PC-9 (cell line): ENCODE measurements at regions of chr7 and their contacts with region 1.

Region 1: GRCh38 chr7:95871078-95871782 is 98.9 kb downstream of the DYNC1I1 start:
- DNase-seq: peak in 1 of 2 experiments; percentile 9
- H3K4me3 ChIP-seq: no peak overlapping the region
- H3K27ac ChIP-seq: no peak overlapping the region
- H3K4me1 ChIP-seq: no peaks in the 10 kb centered on the region
- H3K27me3 ChIP-seq: no peaks in the 10 kb centered on the region
- CTCF ChIP-seq: peak; percentile 74

Region 2: GRCh38 chr7:95527033-95527775 is 344.0 kb before region 1 on chr7:
- CTCF ChIA-PET with region 1: no interaction called
- POLR2A ChIA-PET with region 1: no interaction called
- intact Hi-C with region 1: loop called (anchors 2 kb)
- DNase-seq: peak; percentile 42 to 47
- H3K4me3 ChIP-seq: no peak overlapping the region
- H3K27ac ChIP-seq: no peak overlapping the region
- H3K4me1 ChIP-seq: peaks cover 10% of the 10 kb centered on the region; the same call in 1 of the 2 replicates
- H3K27me3 ChIP-seq: no peaks in the 10 kb centered on the region
- CTCF ChIP-seq: peak; percentile 95

Region 3: DNA sequence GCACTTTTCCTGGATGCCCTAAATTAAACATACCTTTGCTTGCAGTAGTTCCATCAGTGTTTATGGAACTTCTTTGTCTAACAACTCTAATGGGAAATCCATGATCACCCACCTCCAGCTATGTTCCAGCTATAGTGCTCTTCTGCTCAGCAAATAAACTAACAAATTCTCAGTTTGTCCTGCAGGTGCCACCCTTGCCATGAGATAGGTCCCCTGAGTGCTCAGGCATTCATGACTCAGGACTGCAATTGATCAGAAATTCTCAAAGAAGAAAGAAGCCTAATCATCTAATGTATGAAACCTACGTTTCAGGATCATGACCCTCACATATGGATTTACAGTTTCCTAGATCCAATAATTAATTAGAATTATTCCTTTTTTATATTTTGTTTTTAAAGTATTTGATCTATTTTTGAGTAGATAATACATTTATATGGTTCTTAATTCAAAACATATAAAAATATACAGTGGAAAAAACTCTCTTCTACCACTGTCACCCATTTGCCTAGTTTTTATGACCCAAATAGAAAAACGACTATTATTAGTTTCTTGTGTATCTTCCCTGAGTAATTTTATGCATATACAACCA is 147.5 kb before region 1 on chr7:
- CTCF ChIA-PET with region 1: no interaction called
- POLR2A ChIA-PET with region 1: no interaction called
- intact Hi-C with region 1: loop called (anchors 1 kb)
- DNase-seq: peak in 1 of 2 experiments; percentile 39
- H3K4me3 ChIP-seq: no peak overlapping the region
- H3K27ac ChIP-seq: no peak overlapping the region
- H3K4me1 ChIP-seq: no peaks in the 10 kb centered on the region
- H3K27me3 ChIP-seq: no peaks in the 10 kb centered on the region; the same call in 1 of the 2 replicates
- CTCF ChIP-seq: peak; percentile 74

Region 4: GRCh38 chr7:95772298-95772770 is 98.9 kb before region 1 on chr7 and contains the start of gene DYNC1I1:
- CTCF ChIA-PET with region 1: no interaction called
- POLR2A ChIA-PET with region 1: no interaction called
- intact Hi-C with region 1: loop called (anchors 10 kb)
- DNase-seq: peak; percentile 43 to 54
- H3K4me3 ChIP-seq: peak within 1 kb of the TSS; percentile 73
- H3K27ac ChIP-seq: no peak within 1 kb of the TSS
- H3K4me1 ChIP-seq: no peaks in the 10 kb centered on the region
- H3K27me3 ChIP-seq: no peaks in the 10 kb centered on the region
- CTCF ChIP-seq: no peak
- total RNA-seq, gene DYNC1I1: not detected in 2 replicates

Region 5: DNA sequence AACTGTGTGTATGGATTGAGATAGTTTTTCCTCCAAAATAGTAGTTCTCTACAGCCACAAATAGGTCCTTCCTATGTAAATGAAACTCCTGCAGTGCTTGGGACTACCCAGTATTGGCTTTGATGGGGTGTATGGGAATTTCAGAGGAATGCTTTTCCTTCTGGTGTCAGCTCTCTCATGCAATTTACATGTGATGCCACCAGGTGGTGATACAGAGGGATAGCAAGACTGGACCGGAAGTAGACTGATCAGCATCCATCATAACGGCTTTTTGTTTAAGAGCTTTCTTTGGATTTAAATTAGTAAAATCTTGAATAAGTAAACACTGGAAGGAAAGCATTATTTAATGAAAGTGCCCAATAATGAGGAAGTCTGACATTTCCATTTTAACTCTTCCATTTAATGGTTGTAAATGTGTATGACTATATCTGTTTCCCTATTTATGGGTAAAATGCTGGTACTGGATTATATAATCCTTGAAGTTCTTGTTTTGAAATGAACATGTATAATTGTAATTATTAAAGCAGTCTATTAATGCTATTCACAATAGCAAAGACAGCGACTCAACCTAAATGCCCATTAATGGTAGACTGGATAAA is 76.2 kb before region 1 on chr7:
- CTCF ChIA-PET with region 1: no interaction called
- POLR2A ChIA-PET with region 1: no interaction called
- intact Hi-C with region 1: loop called (anchors 5 kb)
- DNase-seq: no peak
- H3K4me3 ChIP-seq: no peak overlapping the region
- H3K27ac ChIP-seq: no peak overlapping the region
- H3K4me1 ChIP-seq: no peaks in the 10 kb centered on the region
- H3K27me3 ChIP-seq: no peaks in the 10 kb centered on the region
- CTCF ChIP-seq: peak; percentile 54

Region 6: GRCh38 chr7:95840953-95841950 is 30.0 kb before region 1 on chr7:
- CTCF ChIA-PET with region 1: no interaction called
- POLR2A ChIA-PET with region 1: no interaction called
- intact Hi-C with region 1: no loop called
- DNase-seq: no peak
- H3K4me3 ChIP-seq: no peak overlapping the region
- H3K27ac ChIP-seq: no peak overlapping the region
- H3K4me1 ChIP-seq: no peaks in the 10 kb centered on the region
- H3K27me3 ChIP-seq: no peaks in the 10 kb centered on the region
- CTCF ChIP-seq: peak; percentile 59